ACHN (cell line): ENCODE measurements at regions of chr17 and their contacts with region 1.

Region 1: DNA sequence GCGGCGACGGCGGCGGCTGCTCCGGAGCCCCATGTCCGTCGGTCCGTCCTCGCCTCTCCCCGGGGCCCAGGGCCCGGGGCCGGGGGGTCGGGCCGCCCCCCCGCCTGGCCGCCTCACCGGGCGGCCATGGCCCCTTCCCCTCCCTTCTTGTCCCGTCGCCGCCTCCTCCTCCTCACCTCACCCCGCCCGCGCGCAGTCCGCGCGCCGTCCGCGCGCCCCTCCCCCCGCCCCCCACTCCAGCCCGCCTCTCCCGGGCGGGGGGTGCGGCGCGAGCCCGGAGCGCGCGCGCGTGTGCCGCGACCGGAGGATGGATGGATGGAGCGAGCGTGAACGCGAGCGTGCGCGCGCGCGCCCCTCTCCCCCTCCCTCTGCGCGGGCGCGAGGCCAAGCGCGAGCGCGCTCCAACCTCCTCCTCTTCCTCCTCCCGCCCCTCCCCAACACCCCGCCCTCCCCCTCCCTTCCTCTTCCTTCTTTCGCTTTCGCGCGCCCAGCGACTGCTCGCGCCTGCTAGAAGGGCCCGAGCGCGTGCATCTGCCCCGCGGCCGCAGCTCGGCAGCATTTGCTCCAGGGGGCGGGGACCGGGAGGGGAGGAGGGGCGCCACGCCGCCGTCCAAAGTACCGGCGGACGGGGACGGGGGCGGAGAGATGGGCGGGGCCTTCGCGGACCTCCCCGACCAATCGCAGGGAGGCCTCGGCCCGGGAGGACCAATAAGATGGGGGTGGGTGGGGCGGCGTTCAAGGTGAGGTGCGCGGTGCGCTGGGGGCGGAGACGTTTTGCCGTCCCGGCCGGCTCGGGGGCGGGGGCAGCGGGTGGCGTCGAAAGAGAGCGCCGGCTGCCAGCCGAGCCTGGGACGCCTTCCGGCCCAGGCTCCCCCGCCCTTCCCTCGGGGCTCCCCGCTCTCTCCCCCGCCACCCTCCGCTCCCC is at the start of gene ATXN7L3:
- DNase-seq: peak; percentile 98

Region 2: GRCh38 chr17:44269535-44270240 is 69.9 kb after region 1 on chr17:
- in situ Hi-C with region 1: no loop called
- DNase-seq: no peak

Region 3: DNA sequence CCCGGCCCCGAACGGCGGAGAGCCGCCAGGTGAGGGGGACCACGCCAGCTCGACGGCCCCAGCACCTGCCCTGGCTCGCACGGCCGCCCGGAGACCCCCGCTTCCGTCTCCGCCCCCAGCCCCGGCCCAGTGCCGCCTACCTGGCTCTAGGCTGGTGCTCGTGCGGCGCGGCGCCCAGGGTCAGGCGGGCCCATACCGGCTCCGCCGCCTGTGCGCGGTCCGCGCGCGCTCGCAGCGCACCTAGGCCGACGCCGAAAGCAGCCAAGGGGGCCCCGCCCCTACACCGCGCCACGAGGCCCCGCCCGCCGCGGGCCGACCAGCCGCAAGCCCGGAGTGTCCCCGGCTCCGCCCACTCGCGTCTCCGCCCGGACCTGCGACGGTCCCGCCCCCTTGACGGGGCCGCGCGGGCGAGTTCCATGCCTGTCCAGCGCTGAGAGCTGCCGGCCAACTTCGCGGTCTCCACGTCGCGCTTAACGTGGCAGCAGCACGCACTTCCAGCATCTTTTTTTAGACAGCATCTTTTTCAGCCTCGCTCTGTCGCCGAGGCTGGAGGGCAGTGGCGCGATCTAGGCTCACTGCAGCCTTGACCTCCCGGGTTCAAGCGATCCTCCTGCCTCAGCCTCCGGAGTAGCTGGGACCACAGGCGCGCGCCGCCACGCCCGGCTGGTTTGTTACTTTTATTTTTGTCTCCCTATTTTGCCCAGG is 124.9 kb after region 1 on chr17 and contains the start of gene SLC25A39:
- in situ Hi-C with region 1: loop called (anchors 10 kb)
- DNase-seq: peak; percentile 96

Region 4: DNA sequence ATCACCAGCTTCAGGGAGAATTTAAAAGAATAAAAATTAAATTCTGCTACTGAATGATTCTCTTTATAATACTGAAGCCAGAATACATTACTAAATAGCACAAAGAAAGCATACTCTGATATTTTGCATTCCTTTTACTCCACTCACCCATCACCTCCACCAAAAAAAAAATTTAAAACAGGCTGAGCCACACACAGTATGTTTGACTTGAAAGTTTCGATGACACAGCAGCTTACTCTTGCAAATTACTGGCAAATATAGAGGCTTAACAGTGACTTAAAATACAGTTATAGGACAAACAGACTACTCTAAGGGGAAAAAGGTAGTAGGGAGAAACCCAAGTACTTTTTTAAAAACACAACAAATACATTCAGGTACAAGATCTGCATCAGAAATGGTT is 264.2 kb after region 1 on chr17:
- in situ Hi-C with region 1: no loop called
- DNase-seq: no peak